Gastrocnemius medialis (tissue), 4 donors: ENCODE measurements at regions of chr15 and their contacts with region 1.

Region 1: DNA sequence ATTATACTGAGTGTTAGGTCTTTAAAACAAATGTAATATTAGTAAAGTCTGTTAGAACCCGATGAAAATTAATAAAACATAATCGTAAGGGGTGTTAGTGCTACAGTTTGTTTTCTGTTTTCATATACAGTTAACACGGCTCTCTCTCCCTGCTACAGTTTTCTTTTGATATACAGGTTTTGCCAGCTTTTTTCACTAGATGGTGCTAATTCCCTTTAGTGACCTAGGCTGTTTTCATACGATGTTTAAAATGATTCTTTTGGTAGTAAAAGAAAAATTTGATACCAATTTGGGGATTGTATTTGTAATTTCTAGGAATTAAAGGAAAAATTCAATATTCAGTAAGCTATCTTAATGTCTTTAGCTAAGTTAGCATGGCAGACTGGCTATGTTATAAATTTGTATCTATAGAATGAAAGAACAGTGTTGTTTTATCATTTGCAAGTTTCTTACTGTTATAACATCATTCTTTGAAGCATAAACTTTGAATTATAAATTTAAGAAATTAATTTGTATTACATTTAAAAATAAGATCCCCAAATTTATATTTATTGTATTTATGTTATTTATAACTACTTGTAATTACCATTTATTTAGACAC is 11.5 kb downstream of the APH1B start:
- DNase-seq: no peak
- ATAC-seq: peak; percentile 61 to 74
- H3K4me3 ChIP-seq: no peak overlapping the region
- H3K27ac ChIP-seq: no peak overlapping the region
- H3K4me1 ChIP-seq: peaks cover 0 to 5% of the 10 kb centered on the region in 2 donors
- H3K27me3 ChIP-seq: no peaks in the 10 kb centered on the region
- CTCF ChIP-seq: peak in 4 of 5 experiments; percentile 38 to 71 (median 69)
- POLR2A ChIP-seq: no peak

Region 2: GRCh38 chr15:63107895-63108546 is 180.9 kb before region 1 on chr15:
- in situ Hi-C with region 1: no loop called
- intact Hi-C with region 1: no loop called
- DNase-seq: no peak
- ATAC-seq: no peak
- H3K4me3 ChIP-seq: no peak overlapping the region
- H3K27ac ChIP-seq: no peak overlapping the region
- H3K4me1 ChIP-seq: no peaks in the 10 kb centered on the region
- H3K27me3 ChIP-seq: no peaks in the 10 kb centered on the region
- CTCF ChIP-seq: no peak
- POLR2A ChIP-seq: no peak

Region 3: GRCh38 chr15:63389902-63390670 is 101.2 kb after region 1 on chr15:
- in situ Hi-C with region 1: loop called in 1 of 4 experiments (anchors 10 kb)
- intact Hi-C with region 1: no loop called
- DNase-seq: no peak
- ATAC-seq: no peak
- H3K4me3 ChIP-seq: no peak overlapping the region
- H3K27ac ChIP-seq: no peak overlapping the region
- H3K4me1 ChIP-seq: peaks cover 6 to 21% of the 10 kb centered on the region in 2 donors
- H3K27me3 ChIP-seq: no peaks in the 10 kb centered on the region
- CTCF ChIP-seq: no peak
- POLR2A ChIP-seq: no peak

Region 4: DNA sequence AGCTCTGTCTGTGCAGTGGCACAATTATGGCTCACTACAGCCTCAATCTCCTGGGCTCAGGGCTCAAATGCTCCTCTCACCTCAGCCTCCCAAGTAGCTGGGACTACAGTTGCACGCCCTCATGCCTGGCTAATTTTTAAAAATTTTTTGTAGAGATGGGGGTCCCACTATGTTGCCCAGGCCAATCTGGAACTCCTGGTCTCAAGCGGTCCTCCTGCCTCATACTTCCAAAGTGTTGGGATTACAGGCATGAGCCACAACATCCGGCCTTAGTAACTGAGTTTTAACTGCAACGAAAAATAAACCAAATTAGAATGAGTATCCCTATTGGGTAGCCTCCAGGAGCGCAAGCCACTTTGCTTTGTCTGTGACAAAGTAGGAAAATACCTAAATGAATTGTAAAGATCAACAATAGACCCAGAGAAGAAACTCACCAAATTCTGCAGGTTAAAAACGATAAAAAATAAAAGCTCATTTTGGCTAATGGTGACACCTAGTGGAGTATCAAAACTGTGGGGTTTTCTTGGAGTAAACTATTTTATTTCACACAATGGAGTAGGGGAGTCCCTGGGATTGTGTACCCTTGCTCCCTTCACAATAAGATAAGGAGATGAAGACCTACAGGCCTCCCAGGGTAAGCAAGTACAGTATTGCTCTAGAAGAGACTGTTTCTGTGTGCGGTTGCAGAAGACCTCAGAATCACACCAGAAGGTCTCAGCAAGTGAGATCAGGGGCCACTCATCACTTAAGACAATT is 113.8 kb after region 1 on chr15:
- in situ Hi-C with region 1: loop called (anchors 5 to 10 kb)
- intact Hi-C with region 1: loop called (anchors 1 kb)
- DNase-seq: no peak
- ATAC-seq: peak in 1 of 2 donors; percentile 68
- H3K4me3 ChIP-seq: no peak overlapping the region
- H3K27ac ChIP-seq: no peak overlapping the region
- H3K4me1 ChIP-seq: no peaks in the 10 kb centered on the region
- H3K27me3 ChIP-seq: no peaks in the 10 kb centered on the region
- CTCF ChIP-seq: peak; percentile 51 to 73 (median 56)
- POLR2A ChIP-seq: no peak